Gastrocnemius medialis (tissue), 4 donors: ENCODE measurements at regions of chr11 and their contacts with region 1.

Region 1: GRCh38 chr11:64778508-64779346 is at the start of gene SF1:
- DNase-seq: peak; percentile 99 to 100
- ATAC-seq: peak; percentile 86 to 93
- H3K4me3 ChIP-seq: peak within 1 kb of the TSS; percentile 73 to 93 (median 77)
- H3K27ac ChIP-seq: peak within 1 kb of the TSS; percentile 98 to 100 (median 98)
- H3K4me1 ChIP-seq: peaks cover 42% of the 10 kb centered on the region in 2 donors
- H3K27me3 ChIP-seq: no peaks in the 10 kb centered on the region
- CTCF ChIP-seq: peak in 1 of 5 experiments; percentile 34
- POLR2A ChIP-seq: peak; percentile 92 to 95
- total RNA-seq, gene SF1: 171 to 249 (median 193) TPM

Region 2: GRCh38 chr11:64629796-64630562 is 148.7 kb before region 1 on chr11:
- in situ Hi-C with region 1: no loop called
- intact Hi-C with region 1: no loop called
- DNase-seq: no peak
- ATAC-seq: no peak
- H3K4me3 ChIP-seq: no peak overlapping the region
- H3K27ac ChIP-seq: no peak overlapping the region
- H3K4me1 ChIP-seq: no peaks in the 10 kb centered on the region
- H3K27me3 ChIP-seq: peaks cover 0 to 7% (median 3%) of the 10 kb centered on the region in 3 donors
- CTCF ChIP-seq: no peak
- POLR2A ChIP-seq: no peak

Region 3: GRCh38 chr11:64742889-64743590 is 35.7 kb before region 1 on chr11:
- in situ Hi-C with region 1: no loop called
- intact Hi-C with region 1: loop called (anchors 5 kb)
- DNase-seq: peak; percentile 48 to 84
- ATAC-seq: peak; percentile 55 to 61
- H3K4me3 ChIP-seq: peak overlapping the region; percentile 59 to 88 (median 76)
- H3K27ac ChIP-seq: peak overlapping the region; percentile 86 to 99 (median 93)
- H3K4me1 ChIP-seq: peaks cover 16 to 32% of the 10 kb centered on the region in 2 donors
- H3K27me3 ChIP-seq: no peaks in the 10 kb centered on the region
- CTCF ChIP-seq: peak; percentile 76 to 96 (median 95)
- POLR2A ChIP-seq: peak; percentile 37 to 68

Region 4: DNA sequence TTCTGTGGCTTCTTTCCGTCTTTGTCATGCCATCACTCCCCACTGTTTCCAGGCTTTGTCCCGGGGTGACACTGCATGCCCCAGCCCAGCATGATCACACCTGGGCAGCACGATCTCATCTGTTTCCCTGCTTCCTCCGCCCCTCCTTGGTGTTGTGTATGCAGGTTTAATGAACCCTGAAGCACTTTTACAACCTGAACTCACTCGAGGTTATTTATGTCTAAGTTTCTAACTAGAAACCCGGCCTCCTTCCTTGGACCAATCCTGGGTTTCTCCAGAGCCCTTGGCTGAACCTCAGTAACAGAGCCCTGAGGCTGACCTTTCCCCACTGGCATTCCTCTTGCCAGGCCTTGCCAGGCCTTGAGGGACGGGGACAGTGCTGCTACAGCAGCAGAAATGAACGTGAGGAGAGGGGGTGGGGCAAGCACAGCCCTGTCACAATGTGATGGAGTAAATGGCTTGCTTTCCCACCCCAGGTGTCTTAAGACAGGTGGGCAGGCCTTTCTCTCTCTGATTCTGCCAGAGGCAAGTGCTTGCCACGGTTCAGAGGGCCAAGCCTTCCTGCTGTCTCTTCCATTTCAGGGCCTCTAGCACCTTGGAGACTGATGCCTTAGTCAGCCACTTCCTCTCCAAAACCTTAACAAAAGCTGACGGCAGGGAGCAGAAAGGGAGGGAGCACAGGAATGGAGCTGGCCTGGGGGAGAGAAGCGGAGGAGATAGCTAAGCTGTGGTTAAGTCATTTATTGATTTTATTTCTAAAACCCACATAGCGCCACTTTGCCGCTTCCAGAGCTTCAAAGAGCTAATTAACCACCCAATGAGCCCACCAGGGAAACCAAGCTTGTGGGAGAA is 15.8 kb before region 1 on chr11:
- in situ Hi-C with region 1: no loop called
- intact Hi-C with region 1: loop called (anchors 2 kb)
- DNase-seq: peak in 1 of 2 donors; percentile 97
- ATAC-seq: peak; percentile 24 to 57
- H3K4me3 ChIP-seq: peak overlapping the region in 1 of 4 donors; percentile 24
- H3K27ac ChIP-seq: peak overlapping the region; percentile 91 to 99 (median 94)
- H3K4me1 ChIP-seq: peaks cover 79 to 85% of the 10 kb centered on the region in 2 donors
- H3K27me3 ChIP-seq: no peaks in the 10 kb centered on the region
- CTCF ChIP-seq: no peak
- POLR2A ChIP-seq: peak in 1 of 2 donors; percentile 24

Region 5: GRCh38 chr11:64803163-64803845 is 24.6 kb after region 1 on chr11 and contains the start of gene MAP4K2:
- in situ Hi-C with region 1: no loop called
- intact Hi-C with region 1: loop called (anchors 1 kb)
- DNase-seq: peak; percentile 73 to 85
- ATAC-seq: peak; percentile 91 to 93
- H3K4me3 ChIP-seq: peak within 1 kb of the TSS; percentile 69 to 80 (median 77)
- H3K27ac ChIP-seq: peak within 1 kb of the TSS; percentile 85 to 91 (median 89)
- H3K4me1 ChIP-seq: peaks cover 12 to 16% of the 10 kb centered on the region in 2 donors
- H3K27me3 ChIP-seq: no peaks in the 10 kb centered on the region
- CTCF ChIP-seq: peak in 2 of 5 experiments; percentile 25 to 29
- POLR2A ChIP-seq: peak; percentile 21 to 28
- total RNA-seq, gene MAP4K2: 4.3 to 14.8 (median 6.2) TPM